GM12878 (cell line): ENCODE measurements at regions of chr18 and their contacts with region 1.

Region 1: DNA sequence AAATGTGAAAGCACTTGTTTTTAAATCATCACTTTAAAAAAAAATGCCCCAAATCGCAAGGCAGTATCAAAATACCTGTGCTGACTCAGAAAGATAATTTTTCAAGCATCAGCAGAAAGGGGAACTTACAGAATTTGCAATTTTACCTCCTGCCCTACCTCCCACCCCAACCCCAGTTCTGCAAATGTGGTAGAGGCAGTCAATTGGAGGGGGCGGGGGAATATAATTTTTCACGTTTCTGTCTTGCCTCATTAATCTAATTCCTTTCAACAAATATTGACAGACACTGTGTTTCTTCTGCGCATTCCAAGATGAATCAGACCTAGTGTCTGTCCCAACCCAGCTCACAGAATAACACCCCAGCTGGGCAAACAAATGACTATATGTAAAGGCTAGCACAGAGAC is 76.8 kb downstream of the ALPK2 start:
- DNase-seq: peak; percentile 82
- ATAC-seq: peak; percentile 78
- H3K4me3 ChIP-seq: no peak overlapping the region
- H3K27ac ChIP-seq: peak overlapping the region; percentile 80
- H3K4me1 ChIP-seq: peaks cover 37% of the 10 kb centered on the region
- H3K27me3 ChIP-seq: no peaks in the 10 kb centered on the region
- CTCF ChIP-seq: no peak
- EP300 ChIP-seq: peak; percentile 97
- POLR2A ChIP-seq: no peak
- RAD21 ChIP-seq: peak; percentile 25; the same call in 1 of the 2 replicates

Region 2: DNA sequence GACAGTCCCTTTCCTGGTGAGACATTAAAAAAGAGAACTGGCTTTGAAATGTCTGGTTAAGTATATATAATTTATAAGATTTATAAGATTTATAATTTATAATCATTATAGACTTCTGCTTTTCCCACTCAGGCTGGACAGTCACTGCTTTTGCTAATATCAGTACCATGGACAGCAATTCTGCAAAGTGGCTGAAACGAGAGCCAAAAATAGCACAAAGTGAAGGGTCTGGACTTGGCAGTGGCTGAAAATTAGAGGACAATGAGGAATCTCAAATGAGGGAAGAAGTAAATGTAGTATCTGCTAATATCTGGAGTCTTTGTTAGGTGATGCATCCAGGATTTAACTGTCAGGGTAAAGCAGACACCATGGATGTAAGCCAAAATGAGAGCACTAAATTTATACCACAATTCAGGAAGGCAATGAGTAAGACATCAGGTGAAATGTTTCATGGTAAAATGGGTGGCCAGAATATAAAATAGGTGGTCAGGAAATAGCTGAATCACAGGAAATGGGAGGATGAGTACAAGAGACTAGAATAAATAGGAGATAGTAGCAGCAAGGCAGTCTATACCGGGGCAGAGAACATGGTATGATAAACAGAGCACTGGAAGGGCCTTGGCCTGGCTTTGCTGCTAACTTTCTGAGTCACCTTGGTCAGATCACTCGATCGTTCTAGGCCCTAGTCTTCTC is 1444.8 kb before region 1 on chr18:
- CTCF ChIA-PET with region 1: no interaction called
- POLR2A ChIA-PET with region 1: no interaction called
- RAD21 ChIA-PET with region 1: no interaction called
- SMC1A ChIA-PET with region 1: no interaction called
- in situ Hi-C with region 1: no loop called
- intact Hi-C with region 1: no loop called
- DNase-seq: no peak
- ATAC-seq: peak; percentile 57
- H3K4me3 ChIP-seq: no peak overlapping the region
- H3K27ac ChIP-seq: no peak overlapping the region
- H3K4me1 ChIP-seq: no peaks in the 10 kb centered on the region
- H3K27me3 ChIP-seq: no peaks in the 10 kb centered on the region
- CTCF ChIP-seq: no peak
- EP300 ChIP-seq: no peak
- POLR2A ChIP-seq: no peak
- RAD21 ChIP-seq: no peak

Region 3: DNA sequence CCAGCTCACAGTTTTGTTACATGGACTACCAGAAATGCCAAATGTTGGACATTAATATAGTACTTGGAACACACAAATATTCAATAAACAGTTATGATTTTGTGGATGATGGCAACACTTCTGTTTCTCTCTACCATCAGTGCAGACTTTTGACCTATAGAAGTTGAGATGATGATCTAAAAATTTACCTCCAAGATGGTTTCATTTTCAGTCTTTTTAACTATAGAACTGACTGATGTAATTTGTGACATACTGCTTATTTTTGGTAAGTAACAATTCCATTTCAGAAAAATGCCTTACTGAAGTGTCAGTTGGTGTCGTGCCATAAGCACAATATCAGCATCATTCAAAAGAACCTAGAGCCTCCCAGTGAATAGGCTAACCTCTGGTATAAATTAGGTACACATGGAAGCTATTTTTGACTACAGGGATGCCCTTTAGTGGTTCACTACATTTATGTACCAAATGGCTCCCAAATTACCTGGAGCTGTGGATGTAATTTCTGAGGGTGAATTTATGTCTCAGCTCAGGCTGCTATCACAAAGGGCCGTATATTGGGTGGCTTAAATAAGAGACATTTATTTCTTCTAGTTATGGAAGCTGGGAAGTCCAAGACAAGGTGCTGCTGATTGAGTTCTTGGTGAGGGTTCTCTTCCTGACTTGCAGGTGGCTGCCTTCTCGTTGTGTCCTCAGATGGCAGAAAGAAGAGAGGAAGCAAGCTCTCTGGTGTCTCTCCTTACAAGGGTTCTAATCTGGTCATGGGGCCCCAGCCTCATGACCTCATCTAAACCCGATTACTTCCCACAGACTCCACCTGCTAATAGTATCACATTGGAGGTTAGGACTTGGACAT is 10.3 kb after region 1 on chr18:
- CTCF ChIA-PET with region 1: interaction called, 6 read pairs
- POLR2A ChIA-PET with region 1: interaction called, 8 read pairs
- RAD21 ChIA-PET with region 1: interaction called, 13 read pairs
- SMC1A ChIA-PET with region 1: interaction called, 578 read pairs
- in situ Hi-C with region 1: no loop called
- intact Hi-C with region 1: no loop called
- DNase-seq: no peak
- ATAC-seq: peak; percentile 57
- H3K4me3 ChIP-seq: no peak overlapping the region
- H3K27ac ChIP-seq: peak overlapping the region; percentile 83
- H3K4me1 ChIP-seq: peaks cover 60% of the 10 kb centered on the region
- H3K27me3 ChIP-seq: no peaks in the 10 kb centered on the region
- CTCF ChIP-seq: no peak
- EP300 ChIP-seq: no peak
- POLR2A ChIP-seq: peak; percentile 35; the same call in 1 of the 2 replicates
- RAD21 ChIP-seq: no peak

Region 4: GRCh38 chr18:58661423-58661822 is 109.4 kb after region 1 on chr18:
- CTCF ChIA-PET with region 1: interaction called, 6 read pairs
- POLR2A ChIA-PET with region 1: interaction called, 10 read pairs
- RAD21 ChIA-PET with region 1: interaction called, 21 read pairs
- SMC1A ChIA-PET with region 1: interaction called, 682 read pairs
- in situ Hi-C with region 1: no loop called
- intact Hi-C with region 1: no loop called
- DNase-seq: no peak
- ATAC-seq: no peak
- H3K4me3 ChIP-seq: peak overlapping the region; percentile 28; the same call in 1 of the 2 replicates
- H3K27ac ChIP-seq: peak overlapping the region; percentile 45; the same call in 1 of the 2 replicates
- H3K4me1 ChIP-seq: peaks cover 36% of the 10 kb centered on the region
- H3K27me3 ChIP-seq: no peaks in the 10 kb centered on the region
- CTCF ChIP-seq: peak; percentile 4 to 36 (median 20); a peak in 4 of 6 replicates
- EP300 ChIP-seq: no peak
- POLR2A ChIP-seq: no peak
- RAD21 ChIP-seq: peak; percentile 25; the same call in 1 of the 2 replicates